Endothelial cell of umbilical vein (primary cell): ENCODE measurements at regions of chr13 and their contacts with region 1.

Region 1: DNA sequence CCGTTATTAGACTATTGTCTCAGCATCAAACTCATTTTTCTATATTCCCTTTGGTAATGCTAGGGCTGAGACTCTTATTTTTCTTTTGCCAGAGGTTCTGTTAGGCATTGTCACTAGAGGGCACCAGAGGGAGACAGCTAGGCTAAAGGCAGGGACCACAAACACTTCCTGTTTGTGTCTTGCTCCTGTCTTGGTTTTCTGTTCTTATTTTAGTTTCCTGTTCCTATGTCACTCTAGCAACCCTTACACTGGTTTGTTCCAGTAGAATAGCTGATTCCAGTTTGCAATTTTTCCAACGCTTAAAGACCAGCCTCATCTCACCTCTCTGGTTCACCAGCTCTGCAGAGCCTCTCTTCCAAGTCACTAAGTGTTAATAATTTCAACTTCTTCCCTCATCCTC is 772.0 kb downstream of the DIAPH3 start:
- DNase-seq: peak; percentile 78
- H3K4me3 ChIP-seq: no peak overlapping the region
- H3K27ac ChIP-seq: no peak overlapping the region
- H3K4me1 ChIP-seq: peaks cover 15% of the 10 kb centered on the region
- H3K27me3 ChIP-seq: no peaks in the 10 kb centered on the region
- CTCF ChIP-seq: peak; percentile 76
- POLR2A ChIP-seq: no peak

Region 2: GRCh38 chr13:59318320-59318930 is 73.3 kb before region 1 on chr13:
- CTCF ChIA-PET with region 1: interaction called, 7 read pairs
- POLR2A ChIA-PET with region 1: no interaction called
- dilution Hi-C with region 1: no loop called
- intact Hi-C with region 1: loop called (anchors 2 kb)
- DNase-seq: peak; percentile 86
- H3K4me3 ChIP-seq: no peak overlapping the region
- H3K27ac ChIP-seq: no peak overlapping the region
- H3K4me1 ChIP-seq: peaks cover 23% of the 10 kb centered on the region
- H3K27me3 ChIP-seq: no peaks in the 10 kb centered on the region
- CTCF ChIP-seq: peak; percentile 68 to 71
- POLR2A ChIP-seq: no peak

Region 3: DNA sequence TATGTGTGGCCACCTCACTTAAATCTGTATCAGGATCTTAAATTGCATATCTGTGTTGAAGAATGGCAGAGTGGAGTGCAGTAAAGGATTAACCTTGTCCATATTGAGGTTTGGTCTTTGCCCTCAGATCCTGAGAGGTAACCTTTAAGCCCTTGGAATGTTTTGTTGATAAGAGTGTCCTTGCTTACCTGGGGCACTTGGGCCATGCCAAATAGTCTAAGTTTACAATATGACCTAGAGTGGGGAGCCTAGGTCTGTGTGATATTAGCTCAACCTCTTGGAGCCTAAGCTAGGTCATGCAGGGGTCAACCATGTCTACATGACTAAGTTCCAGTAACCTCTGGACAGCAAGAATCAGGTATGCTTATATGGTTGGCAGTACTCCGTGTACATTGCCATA is 20.5 kb before region 1 on chr13:
- CTCF ChIA-PET with region 1: no interaction called
- POLR2A ChIA-PET with region 1: no interaction called
- dilution Hi-C with region 1: no loop called
- intact Hi-C with region 1: no loop called
- DNase-seq: no peak
- H3K4me3 ChIP-seq: no peak overlapping the region
- H3K27ac ChIP-seq: no peak overlapping the region
- H3K4me1 ChIP-seq: peaks cover 6% of the 10 kb centered on the region
- H3K27me3 ChIP-seq: no peaks in the 10 kb centered on the region
- CTCF ChIP-seq: no peak
- POLR2A ChIP-seq: no peak

Region 4: DNA sequence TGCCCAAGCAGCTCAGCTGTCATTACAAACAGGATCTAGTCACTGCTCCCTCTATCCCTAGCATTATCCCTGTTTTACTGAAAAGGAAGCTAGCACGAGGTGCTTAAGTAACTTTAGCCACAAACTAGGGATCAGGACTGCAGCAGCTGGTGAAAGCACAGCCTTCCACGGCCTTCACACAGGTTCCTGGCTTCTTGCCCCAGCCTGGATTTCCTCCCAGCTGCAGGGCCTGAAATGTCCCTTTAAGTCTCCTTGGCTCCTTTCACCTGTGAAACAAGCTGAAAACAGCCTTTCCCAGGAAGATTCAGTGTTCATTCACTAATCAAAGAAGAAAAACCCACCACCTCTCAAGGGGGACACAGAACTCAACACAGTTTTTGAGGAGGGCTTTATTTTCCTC is 17.5 kb after region 1 on chr13:
- CTCF ChIA-PET with region 1: interaction called, 10 read pairs
- POLR2A ChIA-PET with region 1: no interaction called
- dilution Hi-C with region 1: no loop called
- intact Hi-C with region 1: no loop called
- DNase-seq: peak; percentile 62
- H3K4me3 ChIP-seq: no peak overlapping the region
- H3K27ac ChIP-seq: no peak overlapping the region
- H3K4me1 ChIP-seq: no peaks in the 10 kb centered on the region
- H3K27me3 ChIP-seq: no peaks in the 10 kb centered on the region
- CTCF ChIP-seq: no peak
- POLR2A ChIP-seq: no peak

Region 5: GRCh38 chr13:59477011-59477410 is 85.3 kb after region 1 on chr13:
- CTCF ChIA-PET with region 1: interaction called, 4 read pairs
- POLR2A ChIA-PET with region 1: no interaction called
- dilution Hi-C with region 1: no loop called
- intact Hi-C with region 1: loop called (anchors 1 kb)
- DNase-seq: peak; percentile 41
- H3K4me3 ChIP-seq: no peak overlapping the region
- H3K27ac ChIP-seq: no peak overlapping the region
- H3K4me1 ChIP-seq: peaks cover 44% of the 10 kb centered on the region
- H3K27me3 ChIP-seq: no peaks in the 10 kb centered on the region
- CTCF ChIP-seq: peak; percentile 51 to 59
- POLR2A ChIP-seq: no peak

Region 6: DNA sequence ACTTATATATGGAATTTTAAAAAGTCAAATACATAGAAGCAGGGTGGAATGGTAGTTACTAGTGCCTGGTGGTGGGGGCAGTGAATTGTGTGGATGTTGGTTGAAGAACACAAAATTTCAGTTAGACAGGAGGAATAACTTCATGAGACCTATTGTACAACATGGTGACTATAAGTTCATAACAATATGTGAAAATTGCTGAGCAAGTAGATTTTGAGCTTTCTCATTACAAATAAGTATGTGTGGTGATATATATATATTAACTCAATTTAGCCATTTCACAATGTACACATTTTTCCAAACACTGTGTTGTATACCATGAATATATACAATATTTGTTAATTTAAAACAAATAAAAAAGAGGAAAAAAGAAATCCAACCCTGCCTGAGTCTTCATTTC is 131.0 kb after region 1 on chr13:
- CTCF ChIA-PET with region 1: interaction called, 22 read pairs
- POLR2A ChIA-PET with region 1: no interaction called
- dilution Hi-C with region 1: no loop called
- intact Hi-C with region 1: no loop called
- DNase-seq: no peak
- H3K4me3 ChIP-seq: no peak overlapping the region
- H3K27ac ChIP-seq: no peak overlapping the region
- H3K4me1 ChIP-seq: peaks cover 5% of the 10 kb centered on the region
- H3K27me3 ChIP-seq: no peaks in the 10 kb centered on the region
- CTCF ChIP-seq: no peak
- POLR2A ChIP-seq: no peak

Region 7: DNA sequence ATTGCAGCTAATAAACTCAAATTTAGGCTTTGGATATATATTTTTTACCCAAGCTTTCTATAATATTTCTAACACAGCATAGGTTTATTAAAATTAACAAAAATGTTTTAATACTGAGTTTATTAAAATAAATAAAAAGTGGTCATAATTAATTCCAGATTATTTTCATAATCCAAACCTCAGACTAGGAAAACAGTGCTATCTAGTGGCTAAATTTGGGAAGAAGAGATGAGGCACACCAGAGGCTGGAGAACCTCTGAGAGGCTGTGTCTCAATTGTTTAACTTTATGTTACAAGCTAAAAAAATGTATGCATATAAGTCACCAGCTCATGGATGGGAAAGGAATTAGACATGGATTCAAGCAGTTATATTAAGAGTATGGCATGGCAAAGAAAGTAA is 379.6 kb after region 1 on chr13:
- CTCF ChIA-PET with region 1: interaction called, 8 read pairs
- POLR2A ChIA-PET with region 1: no interaction called
- dilution Hi-C with region 1: no loop called
- intact Hi-C with region 1: loop called (anchors 5 kb)
- DNase-seq: peak; percentile 25
- H3K4me3 ChIP-seq: no peak overlapping the region
- H3K27ac ChIP-seq: no peak overlapping the region
- H3K4me1 ChIP-seq: no peaks in the 10 kb centered on the region
- H3K27me3 ChIP-seq: no peaks in the 10 kb centered on the region
- CTCF ChIP-seq: peak; percentile 39 to 46
- POLR2A ChIP-seq: no peak

Region 8: DNA sequence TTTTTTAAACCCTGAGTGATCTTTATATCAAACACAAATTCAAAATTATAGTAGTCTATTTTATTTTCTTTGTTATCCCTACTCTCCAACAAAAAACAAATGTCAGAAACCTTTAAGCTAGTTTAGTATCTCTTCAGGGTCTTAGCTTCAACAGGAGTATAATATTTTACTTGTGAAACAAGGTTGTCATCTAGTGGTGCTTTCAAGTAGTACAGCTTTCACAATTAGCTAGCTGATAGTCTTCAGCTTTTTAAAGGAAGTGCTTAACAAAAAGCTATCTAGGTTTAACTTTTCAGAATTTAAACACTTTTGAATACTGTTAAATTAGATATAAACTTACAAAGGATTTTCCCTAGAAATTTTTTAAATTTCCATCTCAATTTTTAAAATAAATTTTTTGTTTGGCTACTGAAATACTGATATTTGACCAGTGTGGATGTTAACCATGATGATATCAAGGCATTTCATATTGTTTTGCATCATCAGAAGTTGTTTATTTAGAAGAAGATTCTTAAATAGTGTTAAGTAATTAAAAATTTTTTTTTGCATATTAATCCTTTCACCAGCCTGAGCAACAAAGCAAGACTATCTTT is 1039.5 kb after region 1 on chr13:
- CTCF ChIA-PET with region 1: interaction called, 10 read pairs
- POLR2A ChIA-PET with region 1: no interaction called
- dilution Hi-C with region 1: no loop called
- intact Hi-C with region 1: loop called (anchors 5 kb)
- DNase-seq: peak; percentile 80
- H3K4me3 ChIP-seq: no peak overlapping the region
- H3K27ac ChIP-seq: no peak overlapping the region
- H3K4me1 ChIP-seq: peaks cover 6% of the 10 kb centered on the region
- H3K27me3 ChIP-seq: no peaks in the 10 kb centered on the region
- CTCF ChIP-seq: peak; percentile 44 to 63
- POLR2A ChIP-seq: no peak